ENCODE measurements at regions of chr12 and their contacts with region 1.

Region 1: DNA sequence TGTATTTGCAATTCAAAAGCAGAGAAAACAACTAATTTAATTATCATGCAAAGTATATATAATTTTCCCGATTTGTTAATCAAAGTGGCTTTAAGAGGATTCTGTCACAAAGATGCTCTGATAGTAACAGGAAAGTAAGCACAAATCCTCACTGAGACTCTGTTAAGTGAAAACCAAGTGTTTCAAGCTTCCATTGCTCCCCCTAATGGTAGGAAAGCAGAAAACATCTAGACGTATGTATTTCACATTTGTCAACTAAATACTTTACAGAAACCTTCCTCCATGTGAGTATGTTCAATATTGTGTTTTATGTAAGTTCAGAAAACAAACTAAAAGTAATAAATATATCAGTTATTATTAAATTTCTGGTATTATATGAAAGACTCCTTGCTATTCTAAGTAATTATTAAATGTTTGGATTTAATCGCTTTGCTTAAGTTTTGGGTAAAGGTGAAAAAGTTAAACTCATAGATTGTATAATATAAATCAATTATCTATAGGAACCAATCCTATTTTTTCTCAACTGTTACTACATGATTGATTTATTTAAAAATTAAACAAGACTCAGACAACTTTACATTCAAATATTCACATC is 1.5 kb upstream of the NTS start:
- DNase-seq: no peak
- ATAC-seq: peak; percentile 34
- H3K4me3 Mint-ChIP-seq: no peak overlapping the region
- H3K27ac Mint-ChIP-seq: no peak overlapping the region
- H3K4me1 Mint-ChIP-seq: no peaks in the 10 kb centered on the region
- H3K27me3 Mint-ChIP-seq: no peaks in the 10 kb centered on the region
- CTCF ChIP-seq: peak; percentile 42

Region 2: GRCh38 chr12:84874125-84874824 is 998.3 kb before region 1 on chr12:
- CTCF ChIA-PET with region 1: no interaction called
- POLR2A ChIA-PET with region 1: no interaction called
- intact Hi-C with region 1: loop called (anchors 2 kb)
- DNase-seq: no peak
- ATAC-seq: peak; percentile 56
- H3K4me3 Mint-ChIP-seq: no peak overlapping the region
- H3K27ac Mint-ChIP-seq: no peak overlapping the region
- H3K4me1 Mint-ChIP-seq: no peaks in the 10 kb centered on the region
- H3K27me3 Mint-ChIP-seq: peaks cover 1% of the 10 kb centered on the region
- CTCF ChIP-seq: no peak

Region 3: DNA sequence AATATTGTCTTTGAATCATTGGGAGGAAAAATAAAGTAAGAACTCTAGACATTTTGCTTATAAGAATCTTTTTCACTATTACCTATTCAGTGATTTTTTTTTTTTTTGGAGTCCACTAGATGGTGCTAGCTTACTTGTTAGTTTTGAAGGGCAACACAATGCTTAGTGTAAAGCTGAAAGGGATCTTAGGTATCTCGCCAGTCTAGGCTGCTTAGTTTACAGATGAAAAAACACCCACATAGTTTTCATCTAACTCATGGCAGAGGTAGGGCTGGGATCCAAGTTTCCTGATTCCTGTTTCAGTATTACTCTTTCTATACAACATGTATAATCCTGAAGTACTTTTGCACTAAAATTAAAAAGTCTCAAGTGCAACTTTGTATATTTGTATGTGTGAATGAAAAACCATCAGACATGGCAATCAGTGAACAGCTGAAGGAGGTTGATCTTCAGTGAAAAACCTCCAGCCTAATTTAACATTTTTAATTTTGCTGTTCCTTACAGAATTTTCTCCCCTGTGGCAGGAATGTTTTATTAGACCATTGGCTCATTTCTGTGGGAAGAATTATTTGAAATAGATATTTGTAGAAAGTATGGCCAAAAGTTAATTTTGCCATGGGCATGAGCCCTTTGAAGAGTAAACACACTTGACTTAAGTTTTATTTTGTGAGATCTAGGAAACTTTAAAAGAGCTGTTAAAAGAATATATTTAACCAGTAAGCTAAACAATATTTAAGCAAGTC is 795.7 kb before region 1 on chr12:
- CTCF ChIA-PET with region 1: no interaction called
- POLR2A ChIA-PET with region 1: no interaction called
- intact Hi-C with region 1: loop called (anchors 2 kb)
- DNase-seq: no peak
- ATAC-seq: no peak
- H3K4me3 Mint-ChIP-seq: no peak overlapping the region
- H3K27ac Mint-ChIP-seq: no peak overlapping the region
- H3K4me1 Mint-ChIP-seq: no peaks in the 10 kb centered on the region
- H3K27me3 Mint-ChIP-seq: peaks cover 2% of the 10 kb centered on the region
- CTCF ChIP-seq: no peak

Region 4: GRCh38 chr12:85468356-85469157 is 404.0 kb before region 1 on chr12:
- CTCF ChIA-PET with region 1: interaction called, 5 read pairs
- POLR2A ChIA-PET with region 1: no interaction called
- intact Hi-C with region 1: loop called (anchors 2 kb)
- DNase-seq: no peak
- ATAC-seq: peak; percentile 42
- H3K4me3 Mint-ChIP-seq: peak overlapping the region; percentile 84
- H3K27ac Mint-ChIP-seq: no peak overlapping the region
- H3K4me1 Mint-ChIP-seq: peaks cover 14% of the 10 kb centered on the region
- H3K27me3 Mint-ChIP-seq: peaks cover 3% of the 10 kb centered on the region
- CTCF ChIP-seq: no peak

Region 5: DNA sequence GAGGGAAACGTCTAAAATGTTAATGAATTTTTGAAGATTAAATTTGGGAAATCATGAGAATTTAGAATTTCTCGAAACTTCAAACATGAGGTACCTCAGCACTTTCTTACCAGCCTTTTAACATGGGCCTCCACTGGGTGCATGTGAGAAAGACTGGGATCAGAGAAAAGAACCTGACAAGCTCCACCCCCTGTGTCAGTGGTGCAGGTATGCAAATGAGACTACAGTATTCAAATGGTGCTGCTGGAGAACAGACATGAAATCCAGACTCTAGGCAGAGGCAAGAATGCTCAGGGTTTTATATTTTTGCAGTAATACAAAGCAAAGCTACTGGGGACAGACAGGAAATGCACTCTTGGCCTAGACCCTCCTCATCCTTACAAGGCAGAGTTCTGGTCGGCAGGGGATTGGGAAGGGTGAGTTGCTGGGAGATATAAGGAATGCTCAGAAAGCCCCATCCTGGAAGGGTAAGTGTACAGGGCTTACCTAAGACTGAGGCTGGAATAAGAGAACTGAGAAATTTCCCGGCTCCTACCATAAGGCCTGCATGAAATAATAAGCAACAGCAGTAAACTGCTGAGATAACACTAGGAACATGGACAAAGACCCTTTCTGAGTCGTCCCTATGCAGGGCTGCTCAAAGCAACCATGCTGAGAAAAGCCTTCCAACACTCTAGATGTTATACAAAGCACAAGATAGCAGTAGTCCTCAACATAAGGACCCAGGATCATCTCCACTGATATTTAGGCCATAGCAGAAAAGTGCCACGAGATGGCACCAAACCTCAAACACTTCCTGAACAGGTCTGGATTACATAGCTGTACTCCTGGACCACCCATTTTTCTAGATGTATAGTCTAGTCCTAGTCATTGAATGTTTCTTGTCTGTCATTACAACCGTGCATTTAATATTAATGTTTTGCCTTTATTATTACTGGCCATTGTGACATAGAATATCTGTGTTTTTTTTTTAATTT is 297.2 kb before region 1 on chr12:
- CTCF ChIA-PET with region 1: no interaction called
- POLR2A ChIA-PET with region 1: no interaction called
- intact Hi-C with region 1: loop called (anchors 5 kb)
- DNase-seq: no peak
- ATAC-seq: peak; percentile 31
- H3K4me3 Mint-ChIP-seq: no peak overlapping the region
- H3K27ac Mint-ChIP-seq: no peak overlapping the region
- H3K4me1 Mint-ChIP-seq: no peaks in the 10 kb centered on the region
- H3K27me3 Mint-ChIP-seq: no peaks in the 10 kb centered on the region
- CTCF ChIP-seq: no peak

Region 6: GRCh38 chr12:85843606-85844285 is 28.8 kb before region 1 on chr12:
- CTCF ChIA-PET with region 1: no interaction called
- POLR2A ChIA-PET with region 1: no interaction called
- intact Hi-C with region 1: no loop called
- DNase-seq: no peak
- ATAC-seq: no peak
- H3K4me3 Mint-ChIP-seq: no peak overlapping the region
- H3K27ac Mint-ChIP-seq: no peak overlapping the region
- H3K4me1 Mint-ChIP-seq: no peaks in the 10 kb centered on the region
- H3K27me3 Mint-ChIP-seq: no peaks in the 10 kb centered on the region
- CTCF ChIP-seq: no peak

Measured in activated B cell treated with CpG ODN at 0.5 μM for 24 hours (primary cell).